ENCODE measurements at regions of chr14 and their contacts with region 1.

Region 1: DNA sequence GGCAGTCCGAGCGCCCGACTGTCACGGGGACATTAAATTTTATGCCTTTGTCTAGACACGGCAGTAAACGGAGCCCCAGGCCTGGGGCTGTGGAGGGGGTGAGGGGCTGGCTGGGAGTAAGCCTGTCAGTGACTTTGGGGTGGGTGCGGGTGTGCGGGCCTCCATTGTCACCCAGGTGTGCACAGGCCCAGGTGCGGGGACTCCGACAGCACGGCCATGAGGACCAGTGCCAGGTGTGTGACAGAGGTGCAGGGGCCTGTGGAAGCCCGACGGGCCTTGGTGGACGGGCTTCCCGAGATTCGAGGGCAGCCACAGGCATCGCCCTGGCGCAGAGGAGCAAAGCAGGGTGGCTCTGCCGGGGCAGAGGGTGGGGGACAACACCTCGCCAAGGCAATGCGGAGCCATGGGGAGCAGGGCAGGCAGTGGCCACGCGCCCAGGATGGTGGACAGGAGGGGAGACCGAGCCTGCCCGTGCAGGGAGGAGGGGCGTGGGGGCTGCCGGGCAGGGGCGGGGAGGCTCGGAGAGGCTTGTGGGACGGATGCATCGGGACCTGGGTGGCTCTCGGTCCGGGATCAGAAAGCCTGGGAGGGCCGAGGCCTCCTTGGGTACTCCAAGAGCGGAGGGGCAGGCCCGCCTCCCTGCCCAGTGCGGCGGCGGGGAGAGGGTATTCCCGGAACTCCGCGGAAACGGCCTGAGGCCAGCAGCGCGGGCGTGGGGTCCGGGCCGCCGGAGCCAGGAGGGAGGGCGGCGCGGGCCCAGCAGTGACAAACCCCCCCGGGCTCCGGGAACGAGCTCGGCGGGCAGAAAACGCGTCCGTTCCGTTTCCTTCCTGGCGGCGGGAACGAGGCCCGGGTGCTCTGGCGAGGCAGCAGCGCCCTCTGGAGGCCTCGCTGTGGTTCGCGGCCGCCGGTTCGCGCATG is 1.5 kb downstream of the TMEM121 start:
- DNase-seq: peak; percentile 94

Region 2: GRCh38 chr14:105374383-105374782 is 153.5 kb before region 1 on chr14:
- intact Hi-C with region 1: loop called in 1 of 2 experiments (anchors 5 kb)
- DNase-seq: no peak

Region 3: GRCh38 chr14:105448706-105449111 is 79.2 kb before region 1 on chr14:
- intact Hi-C with region 1: loop called in 1 of 2 experiments (anchors 10 kb)
- DNase-seq: peak; percentile 93

Region 4: DNA sequence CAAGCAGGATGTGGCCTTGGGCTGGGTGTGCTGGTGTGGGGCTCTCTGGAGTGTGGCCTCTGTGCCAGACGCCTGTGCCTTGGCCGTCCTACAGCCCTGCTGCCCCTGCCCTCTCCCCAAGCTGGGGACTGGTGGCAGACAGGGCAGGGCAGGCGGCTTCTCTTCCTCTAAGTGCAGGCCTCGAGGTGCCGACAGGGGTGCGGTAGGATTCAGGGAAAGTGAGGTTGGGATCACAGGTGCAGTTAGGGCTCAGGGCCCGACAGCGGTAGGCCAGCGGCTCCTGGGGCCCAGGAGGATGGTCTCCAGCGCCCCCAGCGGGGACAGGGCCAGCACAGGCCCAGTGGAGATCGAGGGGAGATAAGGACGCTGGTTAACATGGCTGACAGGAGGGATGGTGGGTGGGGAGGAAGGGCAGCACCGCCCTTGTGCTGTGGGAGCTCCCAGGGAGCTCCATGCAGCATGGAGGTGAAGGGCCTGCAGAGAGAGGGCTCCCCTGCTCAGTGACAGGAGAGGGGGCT is 42.2 kb before region 1 on chr14:
- intact Hi-C with region 1: no loop called
- DNase-seq: peak; percentile 82

Region 5: DNA sequence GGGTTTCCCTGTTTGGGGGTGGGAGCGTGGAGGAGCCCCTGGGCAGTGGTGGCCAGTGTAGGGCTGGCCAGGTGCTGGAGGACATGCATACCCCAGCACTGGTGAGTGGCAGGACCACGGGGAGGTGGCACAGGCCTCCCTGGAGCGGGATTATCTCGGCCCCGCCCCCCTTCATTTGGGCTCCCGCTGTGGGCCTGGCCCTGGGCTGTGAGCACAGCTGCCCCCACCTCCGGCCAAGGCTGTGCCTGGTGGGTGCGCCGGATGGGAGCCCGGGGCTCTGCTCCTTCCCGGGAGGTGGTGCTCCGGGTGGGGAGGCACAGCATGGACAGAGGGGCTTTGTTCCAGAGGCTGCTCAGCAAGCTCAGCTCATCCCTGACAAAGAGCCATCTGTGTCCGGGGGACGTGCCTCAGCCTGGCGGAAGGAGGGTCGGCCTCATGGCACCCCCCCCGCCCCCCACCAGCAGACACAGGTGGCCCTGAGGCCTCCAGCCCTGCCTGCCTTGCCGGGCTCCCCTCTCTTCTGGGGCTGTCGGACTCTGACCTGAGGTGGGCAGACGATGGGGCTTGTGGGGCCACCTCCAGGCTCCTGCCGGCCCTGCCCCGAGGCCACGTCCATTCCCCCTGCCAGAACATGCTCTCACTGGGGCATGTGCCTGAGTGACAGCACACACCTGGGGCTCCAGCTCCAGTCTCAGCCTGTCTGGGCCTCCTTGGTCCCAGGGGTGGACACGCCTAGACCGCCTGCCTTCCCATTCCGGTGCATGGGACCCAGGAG is 28.5 kb before region 1 on chr14:
- intact Hi-C with region 1: no loop called
- DNase-seq: peak; percentile 81

Region 6: DNA sequence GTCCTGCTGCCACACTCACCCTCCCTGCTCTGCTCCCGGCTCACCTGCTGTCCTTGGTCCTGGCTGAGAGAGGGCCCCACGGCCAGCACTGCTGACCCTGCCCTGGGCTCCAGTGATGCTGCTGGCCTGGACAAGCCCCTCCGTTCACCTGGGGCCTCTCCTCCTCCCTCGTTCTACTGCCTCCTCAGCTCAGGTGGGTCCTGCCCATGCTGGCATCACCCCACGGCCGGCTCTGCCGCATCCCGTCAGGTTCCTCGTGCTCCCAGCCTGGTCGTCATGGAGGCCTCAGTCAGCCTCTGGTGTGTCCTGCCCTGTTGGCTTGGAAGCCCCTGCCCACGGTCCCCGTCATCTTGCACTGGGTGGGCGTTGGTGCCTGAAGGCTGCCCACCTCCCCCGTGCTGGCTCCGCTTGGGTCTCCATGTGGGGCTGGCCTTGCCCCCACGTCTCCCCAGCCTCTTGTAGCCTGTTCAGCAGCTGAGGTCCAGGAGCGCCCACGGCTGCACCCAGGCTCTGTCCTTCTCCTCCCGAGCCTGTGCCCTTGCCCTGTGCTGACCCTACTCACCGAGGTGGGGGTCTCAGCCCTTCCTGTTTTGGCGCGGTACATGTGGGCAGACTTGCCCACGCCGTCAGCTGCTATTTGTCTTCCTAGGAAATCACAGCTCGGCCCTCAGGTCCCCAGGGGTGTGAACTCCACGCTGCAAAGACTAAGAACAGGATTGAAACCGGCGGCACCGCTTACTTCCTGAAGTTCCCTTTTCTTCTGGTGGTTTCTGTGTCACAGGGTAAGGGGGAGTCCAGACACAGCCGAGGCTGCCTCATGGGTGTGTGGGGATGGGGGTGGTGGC is 120.1 kb after region 1 on chr14:
- intact Hi-C with region 1: no loop called
- DNase-seq: peak; percentile 77